ENCODE measurements at regions of chr2 and their contacts with region 1.

Region 1: DNA sequence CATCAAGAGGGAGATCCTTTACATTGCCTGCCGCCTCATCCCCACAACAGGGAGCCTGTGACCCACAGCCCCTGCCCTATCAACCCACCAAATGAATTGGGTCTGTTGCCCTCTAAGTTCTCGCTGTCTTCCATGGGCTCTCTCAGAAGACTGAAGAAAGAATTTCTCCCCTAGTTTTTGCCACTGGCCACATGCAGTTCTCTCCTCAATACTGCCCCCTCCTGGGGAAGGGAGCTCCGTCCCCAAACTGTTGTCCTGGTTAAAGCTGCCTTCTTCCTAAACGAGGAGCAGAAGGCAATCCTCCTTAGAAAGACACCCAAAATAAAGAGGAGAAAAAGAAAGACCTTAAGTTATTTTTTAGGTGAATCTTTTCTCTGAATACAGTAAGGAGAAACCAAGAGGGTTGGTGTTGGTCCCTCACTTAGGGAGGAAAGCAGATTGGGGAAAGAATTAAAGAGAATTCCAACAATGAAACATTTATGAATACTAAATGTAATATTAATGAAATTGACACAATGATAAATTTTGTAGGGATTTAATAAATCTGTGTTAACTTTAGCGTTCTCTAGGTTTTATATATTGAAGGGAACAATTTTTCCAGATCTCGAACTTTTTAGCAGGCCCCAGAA is 31.1 kb upstream of the SATB2 start:
- DNase-seq: peak; percentile 54
- ATAC-seq: peak; percentile 60
- H3K4me3 ChIP-seq: no peak overlapping the region
- H3K27ac ChIP-seq: no peak overlapping the region
- H3K4me1 ChIP-seq: no peaks in the 10 kb centered on the region
- H3K27me3 ChIP-seq: no peaks in the 10 kb centered on the region
- CTCF ChIP-seq: peak; percentile 76
- EP300 ChIP-seq: no peak
- POLR2A ChIP-seq: no peak
- RAD21 ChIP-seq: 0 out of 2 replicates have a peak, but pooled peaks have one; percentile 17

Region 2: DNA sequence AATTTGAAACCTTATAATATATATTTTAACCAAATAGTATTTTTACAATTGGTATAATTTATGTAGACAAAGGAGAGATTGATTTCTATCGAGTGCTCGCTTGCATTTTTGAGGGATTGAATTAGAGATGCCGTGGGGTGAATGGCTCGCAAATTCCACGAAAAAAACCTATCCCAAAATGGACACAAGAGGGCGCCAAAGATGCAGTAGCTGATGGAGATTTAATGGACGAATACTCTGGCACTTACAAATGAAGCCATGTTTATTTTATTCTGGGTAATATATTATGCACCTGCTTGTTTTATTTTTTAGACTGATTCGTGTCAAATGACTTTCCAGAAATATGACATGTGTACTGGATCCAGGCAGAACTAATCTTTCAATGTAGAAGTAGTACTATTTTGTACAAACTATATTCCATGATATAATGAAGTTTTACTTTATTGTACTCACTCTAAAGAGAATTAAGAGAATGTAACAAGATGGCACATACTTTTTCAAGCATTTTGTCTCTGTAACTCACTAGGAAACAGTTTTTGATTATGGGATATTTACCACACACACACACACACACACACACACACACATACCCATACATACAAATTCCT is 1179.1 kb before region 1 on chr2:
- CTCF ChIA-PET with region 1: interaction called, 6 read pairs
- POLR2A ChIA-PET with region 1: no interaction called
- in situ Hi-C with region 1: no loop called
- intact Hi-C with region 1: loop called (anchors 1 kb)
- DNase-seq: peak; percentile 42
- ATAC-seq: peak; percentile 49; the same call in 2 of the 3 replicates
- H3K4me3 ChIP-seq: no peak overlapping the region
- H3K27ac ChIP-seq: no peak overlapping the region
- H3K4me1 ChIP-seq: peaks cover 16% of the 10 kb centered on the region
- H3K27me3 ChIP-seq: peaks cover 2 to 11% of the 10 kb centered on the region in 2 experiments; a peak in 1 of 5 replicates
- CTCF ChIP-seq: peak; percentile 76
- EP300 ChIP-seq: no peak
- POLR2A ChIP-seq: no peak
- RAD21 ChIP-seq: no peak; the same call in 1 of the 2 replicates

Region 3: DNA sequence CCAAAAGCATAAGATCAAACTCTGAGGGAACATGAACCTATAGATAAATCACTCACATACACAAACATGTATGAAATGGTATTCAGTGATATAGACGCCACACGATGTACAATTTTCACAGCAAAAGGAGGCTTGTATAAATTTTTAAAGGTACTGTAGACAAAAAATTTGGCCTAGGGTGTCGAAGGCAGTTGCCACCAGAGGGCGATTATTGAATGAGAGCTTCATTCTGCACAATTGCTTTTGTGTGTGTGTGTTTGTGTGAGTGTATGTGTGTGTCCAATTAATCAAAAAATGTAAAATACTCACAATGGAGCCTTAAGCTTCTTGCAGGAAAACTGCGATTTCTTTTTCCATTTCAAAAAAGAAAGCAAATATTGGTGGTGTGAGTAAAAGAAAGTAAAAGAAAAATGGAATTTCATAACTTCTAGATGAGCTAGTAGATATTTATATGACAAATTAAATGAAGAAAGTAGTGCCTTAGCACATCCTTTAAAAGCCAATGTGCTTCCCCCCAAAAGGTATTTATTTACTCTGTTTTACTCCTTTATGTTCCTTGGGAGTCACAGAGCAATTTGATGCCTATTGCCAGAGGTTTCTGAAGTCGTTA is 831.3 kb before region 1 on chr2:
- CTCF ChIA-PET with region 1: interaction called, 10 read pairs
- POLR2A ChIA-PET with region 1: no interaction called
- in situ Hi-C with region 1: loop called (anchors 10 kb)
- intact Hi-C with region 1: loop called (anchors 1 kb)
- DNase-seq: peak; percentile 7
- ATAC-seq: peak; percentile 28; the same call in 1 of the 3 replicates
- H3K4me3 ChIP-seq: no peak overlapping the region
- H3K27ac ChIP-seq: no peak overlapping the region
- H3K4me1 ChIP-seq: no peaks in the 10 kb centered on the region
- H3K27me3 ChIP-seq: no peaks in the 10 kb centered on the region
- CTCF ChIP-seq: peak; percentile 49
- EP300 ChIP-seq: no peak
- POLR2A ChIP-seq: no peak
- RAD21 ChIP-seq: no peak

Region 4: DNA sequence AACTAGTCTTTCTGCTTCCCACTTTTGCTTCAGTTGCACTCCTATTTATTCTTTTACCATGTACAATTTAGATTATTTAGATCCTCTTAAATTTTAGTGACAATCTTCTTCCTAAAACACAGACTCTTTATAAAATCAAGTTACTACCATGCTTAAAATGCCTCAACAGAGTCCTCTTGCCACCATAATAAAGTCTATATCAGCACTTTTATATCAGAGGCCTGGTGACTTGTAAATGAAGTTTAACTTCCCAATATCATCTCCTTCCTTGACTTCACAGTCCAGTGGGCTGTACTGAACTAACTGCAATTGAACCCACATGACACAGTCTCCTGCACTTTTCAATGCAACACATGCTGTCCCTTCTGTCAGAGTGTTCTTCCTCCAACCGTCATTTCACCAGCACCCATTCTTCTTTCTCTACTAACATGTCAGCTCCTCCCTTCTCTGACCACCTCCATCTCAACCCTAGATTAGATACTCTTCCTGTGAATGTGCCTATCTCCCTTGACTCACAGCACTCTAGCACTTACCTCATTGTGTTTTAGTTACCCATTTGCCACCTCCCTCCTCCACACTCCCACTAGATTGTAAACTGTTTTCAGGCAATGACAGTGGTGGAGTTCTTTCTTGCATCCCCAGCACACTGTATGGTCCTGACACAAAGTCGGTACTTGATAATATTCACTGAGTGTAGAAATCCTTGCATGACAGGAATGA is 446.1 kb before region 1 on chr2:
- CTCF ChIA-PET with region 1: no interaction called
- POLR2A ChIA-PET with region 1: no interaction called
- in situ Hi-C with region 1: loop called (anchors 25 kb)
- intact Hi-C with region 1: no loop called
- DNase-seq: no peak
- ATAC-seq: no peak
- H3K4me3 ChIP-seq: no peak overlapping the region
- H3K27ac ChIP-seq: no peak overlapping the region
- H3K4me1 ChIP-seq: no peaks in the 10 kb centered on the region
- H3K27me3 ChIP-seq: no peaks in the 10 kb centered on the region
- CTCF ChIP-seq: no peak
- EP300 ChIP-seq: no peak
- POLR2A ChIP-seq: no peak
- RAD21 ChIP-seq: no peak

Region 5: GRCh38 chr2:199739413-199740110 is 250.7 kb after region 1 on chr2:
- CTCF ChIA-PET with region 1: no interaction called
- POLR2A ChIA-PET with region 1: no interaction called
- in situ Hi-C with region 1: no loop called
- intact Hi-C with region 1: loop called (anchors 5 kb)
- DNase-seq: peak; percentile 62
- ATAC-seq: peak; percentile 87
- H3K4me3 ChIP-seq: peak overlapping the region in 2 of 3 experiments; percentile 4 to 25; a peak in 1 of 6 replicates
- H3K27ac ChIP-seq: no peak overlapping the region
- H3K4me1 ChIP-seq: peaks cover 46% of the 10 kb centered on the region
- H3K27me3 ChIP-seq: no peaks in the 10 kb centered on the region; a peak in 2 of 5 replicates
- CTCF ChIP-seq: peak; percentile 95
- EP300 ChIP-seq: no peak
- POLR2A ChIP-seq: no peak
- RAD21 ChIP-seq: peak; percentile 92